Natural killer cell (primary cell): ENCODE measurements at regions of chr5 and their contacts with region 1.

Region 1: GRCh38 chr5:162956570-162956969 is 480.8 kb upstream of the CCNG1 start:
- DNase-seq: no peak
- ATAC-seq: no peak
- H3K4me3 ChIP-seq: no peak overlapping the region
- H3K4me3 Mint-ChIP-seq: no peak overlapping the region
- H3K27ac ChIP-seq: no peak overlapping the region
- H3K27ac Mint-ChIP-seq: no peak overlapping the region
- H3K4me1 ChIP-seq: no peaks in the 10 kb centered on the region
- H3K4me1 Mint-ChIP-seq: no peaks in the 10 kb centered on the region
- H3K27me3 ChIP-seq: no peaks in the 10 kb centered on the region
- H3K27me3 Mint-ChIP-seq: no peaks in the 10 kb centered on the region
- CTCF ChIP-seq: no peak

Region 2: GRCh38 chr5:162288647-162289296 is 667.8 kb before region 1 on chr5:
- intact Hi-C with region 1: no loop called
- DNase-seq: no peak
- ATAC-seq: no peak
- H3K4me3 ChIP-seq: no peak overlapping the region
- H3K4me3 Mint-ChIP-seq: no peak overlapping the region
- H3K27ac ChIP-seq: no peak overlapping the region
- H3K27ac Mint-ChIP-seq: no peak overlapping the region
- H3K4me1 ChIP-seq: no peaks in the 10 kb centered on the region
- H3K4me1 Mint-ChIP-seq: no peaks in the 10 kb centered on the region
- H3K27me3 ChIP-seq: no peaks in the 10 kb centered on the region
- H3K27me3 Mint-ChIP-seq: no peaks in the 10 kb centered on the region
- CTCF ChIP-seq: no peak

Region 3: DNA sequence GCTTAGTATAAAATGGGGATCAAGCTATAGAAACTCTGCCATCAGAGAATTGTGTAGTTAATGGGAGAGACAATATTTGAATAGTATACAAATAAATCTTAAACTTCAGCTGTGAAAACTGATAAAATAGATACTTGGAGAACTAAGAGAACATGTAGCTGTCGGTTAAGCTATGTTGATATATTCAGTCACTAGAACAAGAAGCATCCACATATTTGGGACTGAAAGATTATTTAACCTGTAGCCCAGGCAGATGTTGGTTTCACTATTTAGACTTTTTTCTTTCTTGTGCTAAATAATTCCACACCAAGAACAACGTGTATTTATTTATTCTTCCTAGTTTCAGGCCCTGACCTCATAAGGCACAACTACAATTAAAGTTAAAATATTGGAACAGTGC is 40.2 kb before region 1 on chr5:
- intact Hi-C with region 1: loop called (anchors 2 kb)
- DNase-seq: no peak
- ATAC-seq: no peak
- H3K4me3 ChIP-seq: no peak overlapping the region
- H3K4me3 Mint-ChIP-seq: no peak overlapping the region
- H3K27ac ChIP-seq: no peak overlapping the region
- H3K27ac Mint-ChIP-seq: no peak overlapping the region
- H3K4me1 ChIP-seq: no peaks in the 10 kb centered on the region
- H3K4me1 Mint-ChIP-seq: no peaks in the 10 kb centered on the region
- H3K27me3 ChIP-seq: no peaks in the 10 kb centered on the region
- H3K27me3 Mint-ChIP-seq: no peaks in the 10 kb centered on the region
- CTCF ChIP-seq: no peak

Region 4: GRCh38 chr5:163005949-163006348 is 49.4 kb after region 1 on chr5:
- intact Hi-C with region 1: no loop called
- DNase-seq: no peak
- ATAC-seq: no peak
- H3K4me3 ChIP-seq: no peak overlapping the region
- H3K4me3 Mint-ChIP-seq: no peak overlapping the region
- H3K27ac ChIP-seq: no peak overlapping the region
- H3K27ac Mint-ChIP-seq: no peak overlapping the region
- H3K4me1 ChIP-seq: no peaks in the 10 kb centered on the region
- H3K4me1 Mint-ChIP-seq: no peaks in the 10 kb centered on the region
- H3K27me3 ChIP-seq: no peaks in the 10 kb centered on the region
- H3K27me3 Mint-ChIP-seq: no peaks in the 10 kb centered on the region
- CTCF ChIP-seq: no peak